ENCODE measurements at regions of chr6 and their contacts with region 1.

Region 1: DNA sequence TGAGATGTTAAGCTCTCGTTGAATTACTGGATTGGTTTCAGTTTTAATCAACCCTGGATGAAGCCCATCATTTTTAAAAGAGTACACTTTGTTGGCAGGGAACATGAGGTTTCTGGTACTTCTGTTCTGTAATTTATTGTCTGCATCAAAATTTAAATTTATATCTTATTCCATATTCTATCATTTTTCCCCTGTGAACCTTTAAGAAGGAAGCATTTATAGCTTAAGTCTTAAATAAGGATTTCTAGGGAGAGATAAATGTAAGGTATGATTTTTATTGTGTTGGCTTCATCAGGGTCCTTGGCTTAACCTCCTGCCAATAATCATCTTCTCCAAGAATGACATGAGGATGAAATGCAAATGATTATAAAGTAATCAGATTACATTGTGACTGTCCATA is 40.6 kb downstream of the MLIP start:
- DNase-seq: no peak
- H3K4me3 ChIP-seq: no peak overlapping the region
- H3K27ac ChIP-seq: no peak overlapping the region
- H3K4me1 ChIP-seq: no peaks in the 10 kb centered on the region
- CTCF ChIP-seq: no peak

Region 2: DNA sequence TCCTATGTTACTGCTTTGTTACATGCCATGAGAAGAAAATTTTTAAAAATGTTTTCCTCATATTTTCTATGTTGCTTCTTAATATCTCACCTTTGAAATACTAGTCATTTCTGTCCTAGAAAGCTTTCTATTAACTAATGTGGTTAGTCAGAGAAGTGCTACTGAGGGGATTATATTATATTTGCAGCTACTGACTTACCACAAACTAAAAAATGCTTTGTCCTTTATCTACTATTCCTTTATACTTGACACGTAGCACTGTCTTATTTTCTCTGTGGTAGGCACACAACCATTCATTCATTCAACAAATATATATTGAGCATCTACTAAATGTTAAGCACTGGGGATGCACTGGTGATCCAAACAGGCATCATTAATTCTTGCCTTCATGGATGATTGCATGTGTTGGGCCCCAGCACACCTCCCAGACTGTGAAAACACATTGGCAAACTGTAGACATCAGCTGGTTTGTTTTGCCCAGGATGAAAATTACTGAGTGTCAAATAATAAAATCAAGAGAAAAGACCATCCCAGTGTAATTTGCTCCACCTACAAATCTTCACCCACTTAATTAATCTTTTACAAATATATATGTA is 51.4 kb before region 1 on chr6:
- CTCF ChIA-PET with region 1: no interaction called
- POLR2A ChIA-PET with region 1: no interaction called
- intact Hi-C with region 1: loop called (anchors 1 kb)
- DNase-seq: no peak
- H3K4me3 ChIP-seq: no peak overlapping the region
- H3K27ac ChIP-seq: no peak overlapping the region
- H3K4me1 ChIP-seq: no peaks in the 10 kb centered on the region
- CTCF ChIP-seq: no peak

Region 3: GRCh38 chr6:54185885-54186284 is 34.0 kb after region 1 on chr6:
- CTCF ChIA-PET with region 1: no interaction called
- POLR2A ChIA-PET with region 1: no interaction called
- intact Hi-C with region 1: no loop called
- DNase-seq: no peak
- H3K4me3 ChIP-seq: no peak overlapping the region
- H3K27ac ChIP-seq: no peak overlapping the region
- H3K4me1 ChIP-seq: no peaks in the 10 kb centered on the region
- CTCF ChIP-seq: no peak

Measured in OCI-LY7 (cell line).